ENCODE measurements at regions of chr19 and their contacts with region 1.

Region 1: GRCh38 chr19:35648017-35648961 is at the start of gene COX6B1:
- DNase-seq: peak; percentile 90 to 96 (median 94)
- ATAC-seq: peak; percentile 77
- H3K4me3 ChIP-seq: peak within 1 kb of the TSS; percentile 67
- H3K4me1 ChIP-seq: peaks cover 26% of the 10 kb centered on the region
- CTCF ChIP-seq: no peak
- total RNA-seq, gene COX6B1: 460 to 939 (median 669) TPM

Region 2: DNA sequence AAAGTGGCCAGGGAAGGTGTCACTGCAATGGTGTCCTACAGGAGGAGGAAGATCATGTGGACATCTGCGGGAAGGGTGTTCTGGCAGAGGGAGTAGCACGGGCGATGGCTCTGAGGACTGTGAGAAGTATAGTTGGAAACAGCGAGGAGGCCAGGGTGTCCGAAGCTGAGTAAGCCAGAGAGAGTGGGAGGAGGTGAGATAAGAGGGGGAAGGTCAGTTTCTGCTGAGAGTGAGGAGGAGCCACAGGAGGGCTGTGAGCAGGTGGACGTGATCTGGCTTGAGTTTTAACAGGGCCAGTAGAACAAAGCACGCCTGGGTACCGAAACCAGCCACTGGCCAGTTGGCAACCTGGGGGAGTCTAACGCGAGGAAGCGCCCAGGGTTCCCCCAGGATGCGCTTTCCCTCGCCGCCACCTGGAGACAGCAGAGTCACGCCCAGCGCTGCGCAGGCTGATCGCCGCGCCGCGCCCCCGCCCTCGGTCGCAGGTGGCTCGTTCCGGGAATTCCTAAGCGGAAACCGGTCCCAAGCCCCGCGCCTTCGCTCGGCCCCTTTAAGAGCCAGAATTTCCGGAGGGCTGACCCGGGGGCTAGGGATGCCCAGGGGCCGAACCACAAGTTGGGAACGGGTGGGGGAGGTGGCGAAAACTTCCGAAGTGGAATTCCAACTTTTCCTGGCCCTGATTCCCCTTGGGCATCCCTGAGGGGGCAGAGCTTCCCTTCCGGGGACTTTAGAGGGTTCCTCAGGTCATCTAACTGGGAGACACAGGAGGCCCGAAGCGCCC is 400.6 kb before region 1 on chr19:
- intact Hi-C with region 1: loop called in 1 of 2 experiments (anchors 5 kb)
- DNase-seq: peak; percentile 92 to 94 (median 93)
- ATAC-seq: peak; percentile 80
- H3K4me3 ChIP-seq: peak overlapping the region; percentile 77
- H3K4me1 ChIP-seq: peaks cover 20% of the 10 kb centered on the region
- CTCF ChIP-seq: peak; percentile 56

Region 3: DNA sequence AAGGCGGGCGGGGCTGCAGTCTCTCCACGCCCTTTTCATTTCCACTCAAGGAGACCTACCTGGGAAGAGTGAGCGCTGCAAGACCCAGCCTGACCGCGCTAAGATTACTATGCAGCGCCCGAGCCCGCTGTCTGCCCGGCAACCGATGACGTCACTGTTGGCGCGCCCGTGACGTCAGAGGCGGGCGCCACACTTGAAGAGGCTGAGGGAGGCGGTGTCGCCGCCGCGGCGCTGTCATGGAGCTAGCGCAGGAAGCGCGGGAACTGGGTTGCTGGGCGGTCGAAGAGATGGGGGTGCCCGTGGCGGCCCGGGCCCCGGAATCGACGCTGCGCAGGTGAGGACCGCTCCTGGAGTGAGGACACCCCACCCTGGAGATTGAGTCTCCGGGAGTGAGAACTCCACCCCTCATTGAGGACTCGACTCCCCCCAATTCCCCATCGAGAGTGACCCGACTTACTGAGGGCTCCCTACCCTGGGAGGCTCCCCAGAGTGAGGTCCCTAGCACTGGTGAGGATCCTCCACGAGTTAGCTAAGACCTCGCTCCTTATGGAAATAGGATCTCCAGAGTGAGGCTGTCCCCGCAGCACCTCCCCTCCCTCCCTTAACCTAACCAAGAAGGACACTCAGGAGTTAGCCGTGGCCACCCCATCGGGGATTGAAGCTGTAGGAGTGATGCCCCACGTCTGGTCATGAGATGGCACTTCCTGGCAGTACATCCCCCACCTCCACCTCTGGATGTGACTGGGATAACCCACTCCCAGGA is 35.5 kb before region 1 on chr19 and contains the start of gene HAUS5:
- intact Hi-C with region 1: no loop called
- DNase-seq: peak; percentile 95 to 98 (median 98)
- ATAC-seq: peak; percentile 97
- H3K4me3 ChIP-seq: no peak within 1 kb of the TSS
- H3K4me1 ChIP-seq: peaks cover 4% of the 10 kb centered on the region
- CTCF ChIP-seq: no peak
- total RNA-seq, gene HAUS5: 6.4 to 13.2 (median 9.0) TPM

Region 4: GRCh38 chr19:35693830-35694599 is 45.7 kb after region 1 on chr19:
- intact Hi-C with region 1: no loop called
- DNase-seq: peak; percentile 86 to 95 (median 89)
- ATAC-seq: peak; percentile 100
- H3K4me3 ChIP-seq: no peak overlapping the region
- H3K4me1 ChIP-seq: no peaks in the 10 kb centered on the region
- CTCF ChIP-seq: peak; percentile 88